ENCODE measurements at regions of chr2 and their contacts with region 1.

Region 1: DNA sequence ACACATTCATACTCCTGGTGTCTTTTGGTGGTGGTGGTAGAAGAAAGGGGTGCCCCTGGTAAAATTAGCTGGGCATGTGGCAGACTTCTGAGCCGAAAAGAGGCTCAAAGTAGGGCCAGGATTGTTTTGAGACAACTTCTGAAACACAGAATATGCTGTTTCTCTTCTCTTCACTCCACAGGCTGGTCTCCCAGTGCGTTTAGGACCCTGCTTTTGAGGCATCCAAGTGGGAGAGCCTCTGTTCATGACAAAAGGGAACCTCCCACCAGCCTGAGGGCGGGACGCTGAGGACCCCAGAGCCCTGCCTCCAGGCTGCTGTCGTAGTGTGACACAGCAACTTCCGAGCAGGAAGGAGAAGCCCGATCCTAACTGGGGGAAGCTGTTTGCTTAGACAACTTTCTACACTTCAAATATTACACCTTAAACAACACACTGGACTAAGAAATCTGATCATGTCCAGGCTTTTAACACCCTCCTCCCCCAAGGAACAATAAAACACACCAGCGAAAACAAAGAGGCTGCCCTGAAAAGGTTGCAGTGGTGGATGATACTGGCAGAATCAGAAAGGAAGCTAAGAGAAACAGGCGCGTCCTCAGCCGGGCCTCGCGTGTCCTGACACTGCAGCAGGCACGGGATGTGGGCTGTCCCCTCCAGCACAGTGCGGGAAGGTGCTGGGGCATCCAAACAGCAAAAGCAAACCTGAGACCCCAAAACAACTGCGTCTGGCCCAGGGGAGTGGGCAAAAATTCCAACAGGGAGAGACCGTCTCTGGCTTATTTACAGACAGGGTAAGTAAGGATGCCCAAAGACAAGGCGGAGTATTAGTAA is 9.3 kb downstream of the SERTAD2 start:
- DNase-seq: peak; percentile 59
- H3K4me3 Mint-ChIP-seq: peak overlapping the region; percentile 81
- H3K27ac Mint-ChIP-seq: peak overlapping the region; percentile 85
- H3K4me1 Mint-ChIP-seq: peaks cover 39% of the 10 kb centered on the region
- H3K27me3 Mint-ChIP-seq: no peaks in the 10 kb centered on the region

Region 2: DNA sequence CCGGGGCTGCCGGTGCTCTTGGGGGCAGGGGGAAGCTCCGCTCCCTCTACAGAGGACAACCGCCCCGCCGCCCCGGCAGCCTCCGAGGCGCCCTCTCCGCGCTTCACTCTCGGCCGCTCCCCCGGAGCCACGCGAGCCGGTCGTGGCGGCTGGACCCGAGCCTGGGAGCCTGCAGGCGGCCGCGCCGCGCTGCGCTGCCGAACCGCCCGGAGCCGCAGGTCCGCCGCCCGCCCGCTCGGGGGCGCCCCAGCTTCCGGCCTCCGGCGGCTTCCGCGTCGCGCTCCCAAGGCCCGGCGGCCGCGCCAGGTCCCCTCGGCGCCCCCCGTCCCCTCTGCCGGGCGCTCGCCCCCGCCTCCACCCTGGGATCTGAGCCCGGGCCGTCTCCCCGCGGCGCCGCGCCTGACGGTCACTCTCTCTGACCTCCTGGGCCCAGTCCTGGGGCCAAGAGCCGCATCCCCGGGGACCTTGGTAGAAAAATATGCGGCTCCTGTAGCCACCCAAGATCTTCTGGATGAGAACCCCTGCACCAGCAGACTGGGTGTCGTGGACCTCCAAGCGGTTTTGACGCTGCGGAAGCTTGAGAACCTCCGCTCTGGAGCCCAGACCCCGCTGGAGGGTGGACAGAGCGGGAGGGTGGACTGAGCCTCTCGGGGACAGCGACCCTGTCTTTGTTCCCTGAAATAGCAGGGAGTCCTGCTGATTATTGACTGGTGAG is 35.0 kb before region 1 on chr2:
- CTCF ChIA-PET with region 1: interaction called, 31 read pairs
- POLR2A ChIA-PET with region 1: interaction called, 14 read pairs
- DNase-seq: peak; percentile 73
- H3K4me3 Mint-ChIP-seq: peak overlapping the region; percentile 66
- H3K27ac Mint-ChIP-seq: no peak overlapping the region
- H3K4me1 Mint-ChIP-seq: peaks cover 29% of the 10 kb centered on the region
- H3K27me3 Mint-ChIP-seq: peaks cover 12% of the 10 kb centered on the region

Region 3: DNA sequence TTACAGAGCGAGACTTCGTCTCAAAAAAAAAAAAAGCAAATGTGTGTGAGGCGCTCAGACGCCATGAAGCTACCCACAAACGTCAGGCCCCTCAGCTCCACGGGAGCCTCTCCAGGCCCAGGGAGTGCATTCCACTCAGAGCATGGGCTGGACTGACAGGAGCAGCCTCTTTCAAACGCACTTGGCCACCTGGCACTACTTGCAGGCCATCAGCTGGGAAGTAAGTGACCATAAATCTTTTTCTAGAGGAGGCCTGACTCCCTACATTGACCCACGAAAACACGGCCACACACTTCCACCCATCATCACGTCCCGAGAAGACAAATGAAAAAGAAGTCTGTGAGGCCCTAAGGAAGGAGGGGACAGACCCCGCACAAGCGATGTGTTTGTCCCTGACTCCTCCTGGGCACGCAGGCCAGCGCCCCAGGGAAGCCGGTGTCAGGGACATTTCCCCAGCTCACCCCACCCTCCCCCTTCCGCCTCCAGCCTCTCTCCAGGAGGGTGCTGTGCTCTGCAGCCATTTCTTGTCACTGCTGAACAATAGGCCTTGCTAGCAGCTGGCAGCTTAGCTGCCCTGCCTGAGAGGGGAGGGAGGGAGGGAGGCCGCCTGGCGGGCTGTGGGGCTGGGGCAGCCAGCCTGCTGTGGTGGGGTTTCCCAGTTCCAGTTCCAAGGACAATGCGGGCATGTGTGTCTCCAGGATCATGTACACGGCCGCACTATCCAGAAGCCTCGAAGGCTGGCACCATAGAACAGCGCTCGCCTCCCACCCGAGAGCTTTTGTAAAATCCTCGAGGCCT is 17.2 kb before region 1 on chr2:
- CTCF ChIA-PET with region 1: no interaction called
- POLR2A ChIA-PET with region 1: no interaction called
- DNase-seq: no peak
- H3K4me3 Mint-ChIP-seq: no peak overlapping the region
- H3K27ac Mint-ChIP-seq: no peak overlapping the region
- H3K4me1 Mint-ChIP-seq: peaks cover 3% of the 10 kb centered on the region
- H3K27me3 Mint-ChIP-seq: peaks cover 1% of the 10 kb centered on the region

Region 4: DNA sequence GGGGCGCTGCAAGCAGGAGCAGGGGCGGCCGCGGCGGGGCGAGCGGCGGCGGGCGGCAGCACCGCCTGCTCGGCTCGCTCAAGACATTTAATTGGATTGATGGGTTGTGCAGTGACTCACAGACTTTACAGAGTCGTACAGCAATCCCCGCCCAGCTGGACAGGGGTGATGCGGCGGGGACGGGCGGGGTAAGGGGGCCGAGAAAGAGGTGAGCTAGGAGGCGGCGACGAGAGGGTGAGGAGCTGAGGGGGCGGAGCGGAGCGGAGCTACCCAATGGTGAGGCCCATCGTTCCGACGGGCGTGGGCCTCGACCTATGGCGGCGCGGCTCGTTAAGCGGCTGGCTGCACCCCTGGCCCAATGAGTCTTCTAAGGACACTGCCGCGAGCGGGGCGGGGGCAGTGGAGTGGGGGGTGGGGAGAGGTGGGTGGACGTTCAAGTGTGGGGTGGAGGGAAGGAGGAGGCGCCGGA is 106.5 kb after region 1 on chr2:
- CTCF ChIA-PET with region 1: interaction called, 91 read pairs
- POLR2A ChIA-PET with region 1: interaction called, 11 read pairs
- DNase-seq: peak; percentile 98
- H3K4me3 Mint-ChIP-seq: peak overlapping the region; percentile 84
- H3K27ac Mint-ChIP-seq: peak overlapping the region; percentile 94
- H3K4me1 Mint-ChIP-seq: peaks cover 23% of the 10 kb centered on the region
- H3K27me3 Mint-ChIP-seq: no peaks in the 10 kb centered on the region

Region 5: GRCh38 chr2:64831134-64831976 is 187.0 kb after region 1 on chr2:
- CTCF ChIA-PET with region 1: interaction called, 49 read pairs
- POLR2A ChIA-PET with region 1: no interaction called
- DNase-seq: peak; percentile 85
- H3K4me3 Mint-ChIP-seq: peak overlapping the region; percentile 44
- H3K27ac Mint-ChIP-seq: peak overlapping the region; percentile 59
- H3K4me1 Mint-ChIP-seq: peaks cover 21% of the 10 kb centered on the region
- H3K27me3 Mint-ChIP-seq: peaks cover 7% of the 10 kb centered on the region

Region 6: GRCh38 chr2:64865073-64865830 is 220.9 kb after region 1 on chr2:
- CTCF ChIA-PET with region 1: interaction called, 19 read pairs
- POLR2A ChIA-PET with region 1: interaction called, 3 read pairs
- DNase-seq: peak; percentile 69
- H3K4me3 Mint-ChIP-seq: peak overlapping the region; percentile 66
- H3K27ac Mint-ChIP-seq: no peak overlapping the region
- H3K4me1 Mint-ChIP-seq: peaks cover 1% of the 10 kb centered on the region
- H3K27me3 Mint-ChIP-seq: peaks cover 8% of the 10 kb centered on the region

Region 7: DNA sequence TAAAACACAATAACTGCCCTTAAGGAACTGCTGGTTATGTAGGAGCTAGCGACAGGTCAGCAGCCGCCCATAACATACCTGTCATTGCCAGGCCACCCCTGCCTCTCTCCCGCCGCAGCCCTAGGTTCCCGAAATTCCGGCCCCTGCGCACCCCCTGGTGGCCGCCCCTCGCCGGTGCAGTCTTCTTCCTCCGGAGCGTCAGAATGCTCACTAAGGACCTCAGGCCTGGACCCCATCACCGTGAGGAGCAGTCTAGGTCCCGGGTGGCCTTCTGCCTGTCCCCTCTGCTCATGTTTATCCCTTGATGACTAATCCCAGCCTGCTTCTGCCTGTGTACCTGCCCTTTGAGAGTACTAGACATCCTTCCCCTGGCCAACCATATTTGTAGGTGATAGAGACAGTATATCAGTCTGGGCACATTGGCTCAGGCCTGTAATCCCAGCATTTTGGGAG is 229.1 kb after region 1 on chr2:
- CTCF ChIA-PET with region 1: interaction called, 19 read pairs
- POLR2A ChIA-PET with region 1: no interaction called
- DNase-seq: peak; percentile 80
- H3K4me3 Mint-ChIP-seq: no peak overlapping the region
- H3K27ac Mint-ChIP-seq: no peak overlapping the region
- H3K4me1 Mint-ChIP-seq: peaks cover 7% of the 10 kb centered on the region
- H3K27me3 Mint-ChIP-seq: peaks cover 13% of the 10 kb centered on the region

Measured in activated CD4-positive, alpha-beta memory T cell treated with anti-CD3 and anti-CD28 coated beads, Interleukin-2, amount 10 ng/mL, durations not matched to agents 7 days and 5 days (primary cell).